ENCODE measurements at regions of chr15 and their contacts with region 1.

Region 1: DNA sequence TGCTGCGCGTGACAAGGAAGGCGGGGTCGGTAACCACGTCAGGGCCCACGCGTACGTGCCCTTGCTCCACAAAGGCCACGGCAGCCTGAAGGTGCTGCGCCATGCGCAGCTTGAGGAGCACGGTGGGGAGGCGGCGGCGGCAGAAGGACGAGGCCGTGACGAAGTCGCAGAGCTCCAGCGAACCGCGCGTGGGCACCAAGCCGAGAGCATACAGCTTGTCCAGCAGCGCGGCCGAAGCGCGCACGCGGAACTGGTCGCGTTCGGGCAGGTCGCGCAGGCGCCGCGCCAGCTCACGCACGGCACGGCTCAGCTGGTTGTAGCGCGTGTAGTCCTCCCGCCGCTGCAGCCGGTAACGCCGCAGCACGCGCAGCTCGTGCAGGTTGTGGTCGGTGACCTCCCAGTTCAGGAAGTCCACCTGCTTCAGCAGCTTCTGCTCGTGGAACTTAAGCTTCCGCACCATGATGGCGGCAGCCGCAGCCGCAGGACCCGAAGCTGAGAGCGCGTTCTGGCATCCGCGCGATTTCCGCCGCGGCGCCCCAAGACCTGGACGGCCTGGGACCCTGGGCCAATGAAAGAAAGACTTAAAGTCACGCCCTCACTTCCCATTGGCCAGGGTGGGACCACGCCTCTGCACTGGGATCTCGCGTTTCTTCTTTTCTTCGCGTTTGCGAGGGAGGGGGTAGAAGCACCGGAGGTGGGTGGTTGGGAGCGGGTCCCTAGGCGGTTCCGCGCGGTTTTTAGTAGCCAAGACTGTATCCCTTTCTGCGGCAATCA is at the start of gene IMP3:
- DNase-seq: peak; percentile 97
- H3K4me3 Mint-ChIP-seq: peak within 1 kb of the TSS; percentile 95
- H3K27ac Mint-ChIP-seq: peak within 1 kb of the TSS; percentile 91
- H3K4me1 Mint-ChIP-seq: peaks cover 30% of the 10 kb centered on the region
- H3K27me3 Mint-ChIP-seq: no peaks in the 10 kb centered on the region
- total RNA-seq, gene IMP3: 46.1 to 46.8 TPM

Region 2: GRCh38 chr15:75347222-75347878 is 292.5 kb before region 1 on chr15:
- CTCF ChIA-PET with region 1: no interaction called
- intact Hi-C with region 1: loop called (anchors 5 kb)
- DNase-seq: peak; percentile 56
- H3K4me3 Mint-ChIP-seq: peak overlapping the region; percentile 77
- H3K27ac Mint-ChIP-seq: no peak overlapping the region
- H3K4me1 Mint-ChIP-seq: peaks cover 36% of the 10 kb centered on the region
- H3K27me3 Mint-ChIP-seq: no peaks in the 10 kb centered on the region

Region 3: DNA sequence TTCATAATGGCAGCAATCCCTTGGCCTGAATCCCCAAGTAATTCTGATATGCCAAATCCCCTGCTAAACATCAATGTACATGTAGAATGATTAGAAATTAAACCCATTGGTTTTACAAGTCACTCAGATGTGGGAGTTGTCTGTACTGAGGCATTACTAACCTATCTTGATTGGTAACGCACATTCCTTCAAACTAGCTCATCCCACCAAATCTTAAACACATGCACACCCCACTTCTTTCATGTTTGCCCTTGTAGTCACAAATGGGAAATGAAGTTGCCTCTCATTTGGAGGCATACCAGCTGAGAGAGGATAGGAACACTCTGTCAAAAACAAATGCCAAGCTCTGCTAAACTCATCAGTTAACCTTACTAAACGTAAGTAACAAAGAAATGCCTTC is 242.4 kb before region 1 on chr15:
- CTCF ChIA-PET with region 1: no interaction called
- intact Hi-C with region 1: no loop called
- DNase-seq: no peak
- H3K4me3 Mint-ChIP-seq: no peak overlapping the region
- H3K27ac Mint-ChIP-seq: no peak overlapping the region
- H3K4me1 Mint-ChIP-seq: peaks cover 5% of the 10 kb centered on the region
- H3K27me3 Mint-ChIP-seq: no peaks in the 10 kb centered on the region

Region 4: GRCh38 chr15:75416584-75416983 is 223.3 kb before region 1 on chr15:
- CTCF ChIA-PET with region 1: no interaction called
- intact Hi-C with region 1: no loop called
- DNase-seq: no peak
- H3K4me3 Mint-ChIP-seq: no peak overlapping the region
- H3K27ac Mint-ChIP-seq: peak overlapping the region; percentile 61
- H3K4me1 Mint-ChIP-seq: peaks cover 22% of the 10 kb centered on the region
- H3K27me3 Mint-ChIP-seq: no peaks in the 10 kb centered on the region

Region 5: DNA sequence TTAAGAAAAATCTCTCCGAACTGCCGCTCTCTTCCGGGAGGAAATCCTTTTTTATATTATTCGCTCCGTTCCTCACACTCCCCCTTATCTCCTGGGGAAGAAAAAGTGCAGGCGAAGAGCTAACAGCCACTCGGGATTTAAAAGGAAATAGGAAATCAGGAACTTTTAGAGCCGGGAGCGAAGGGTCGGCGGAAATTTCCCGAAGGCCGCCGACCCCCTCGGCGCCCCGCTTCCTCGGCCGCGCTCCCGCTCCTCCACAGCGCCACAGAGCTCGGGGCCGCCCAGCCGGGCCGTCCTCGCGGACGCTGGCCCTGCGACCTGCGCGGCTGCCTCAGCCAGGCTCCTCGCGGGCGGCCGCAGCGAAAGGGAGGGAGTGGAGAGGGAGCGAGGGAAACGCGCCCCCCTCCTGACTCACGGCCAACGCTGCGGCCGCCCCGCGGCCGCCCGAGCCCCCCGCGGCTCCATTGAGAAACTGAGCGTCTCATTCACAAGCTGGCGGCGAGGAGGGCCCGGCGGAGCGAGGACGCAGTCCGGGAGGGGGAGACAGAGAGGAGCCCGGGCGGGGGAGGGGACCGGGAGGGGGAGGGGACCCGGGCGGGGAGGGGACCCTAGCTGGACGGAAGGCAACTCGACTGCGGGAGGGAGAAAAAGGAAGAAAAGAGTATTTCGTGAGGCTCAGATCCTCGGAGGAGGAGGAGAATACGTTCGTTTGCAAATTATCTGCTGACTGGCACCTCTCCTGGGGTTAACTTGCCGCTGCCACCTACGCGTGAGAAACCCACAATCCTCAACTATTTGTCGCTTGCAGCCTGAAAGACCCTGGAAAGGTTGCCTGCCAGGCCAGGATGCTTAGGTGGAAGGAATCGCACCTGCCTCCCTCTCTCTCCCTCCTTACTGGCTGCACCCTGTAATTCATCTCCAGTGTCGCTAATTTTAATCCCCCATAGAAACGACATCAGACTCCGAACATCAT is 60.7 kb before region 1 on chr15 and contains the start of gene PTPN9:
- CTCF ChIA-PET with region 1: interaction called, 3 read pairs
- intact Hi-C with region 1: loop called (anchors 2 kb)
- DNase-seq: peak; percentile 76
- H3K4me3 Mint-ChIP-seq: peak within 1 kb of the TSS; percentile 90
- H3K27ac Mint-ChIP-seq: peak within 1 kb of the TSS; percentile 86
- H3K4me1 Mint-ChIP-seq: peaks cover 14% of the 10 kb centered on the region
- H3K27me3 Mint-ChIP-seq: no peaks in the 10 kb centered on the region
- total RNA-seq, gene PTPN9: 9.5 to 10.1 TPM

Region 6: GRCh38 chr15:75616764-75617163 is 23.1 kb before region 1 on chr15:
- CTCF ChIA-PET with region 1: interaction called, 11 read pairs
- intact Hi-C with region 1: no loop called
- DNase-seq: no peak
- H3K4me3 Mint-ChIP-seq: no peak overlapping the region
- H3K27ac Mint-ChIP-seq: no peak overlapping the region
- H3K4me1 Mint-ChIP-seq: peaks cover 28% of the 10 kb centered on the region
- H3K27me3 Mint-ChIP-seq: no peaks in the 10 kb centered on the region

Region 7: DNA sequence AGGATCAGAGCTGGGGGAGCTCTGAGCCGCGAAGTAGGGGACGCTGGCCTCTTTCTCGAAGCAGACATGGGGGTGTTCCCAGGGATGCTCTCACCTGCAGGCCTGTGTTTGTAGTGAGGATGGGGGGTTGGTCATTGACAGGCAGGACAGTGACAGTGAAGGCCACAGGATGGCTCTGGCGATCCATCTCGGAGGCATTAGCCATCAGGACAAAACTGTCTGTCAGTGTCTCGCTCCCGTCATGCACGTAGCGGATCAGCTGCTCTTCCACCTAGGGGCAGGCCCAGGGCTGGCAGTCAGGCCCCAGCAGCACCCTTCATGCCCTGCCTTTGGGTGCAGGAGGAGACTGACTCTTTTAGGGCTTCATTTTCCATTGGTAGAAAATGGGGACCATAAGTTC is 44.7 kb after region 1 on chr15:
- CTCF ChIA-PET with region 1: interaction called, 3 read pairs
- intact Hi-C with region 1: loop called (anchors 2 kb)
- DNase-seq: no peak
- H3K4me3 Mint-ChIP-seq: no peak overlapping the region
- H3K27ac Mint-ChIP-seq: no peak overlapping the region
- H3K4me1 Mint-ChIP-seq: no peaks in the 10 kb centered on the region
- H3K27me3 Mint-ChIP-seq: no peaks in the 10 kb centered on the region

Region 8: DNA sequence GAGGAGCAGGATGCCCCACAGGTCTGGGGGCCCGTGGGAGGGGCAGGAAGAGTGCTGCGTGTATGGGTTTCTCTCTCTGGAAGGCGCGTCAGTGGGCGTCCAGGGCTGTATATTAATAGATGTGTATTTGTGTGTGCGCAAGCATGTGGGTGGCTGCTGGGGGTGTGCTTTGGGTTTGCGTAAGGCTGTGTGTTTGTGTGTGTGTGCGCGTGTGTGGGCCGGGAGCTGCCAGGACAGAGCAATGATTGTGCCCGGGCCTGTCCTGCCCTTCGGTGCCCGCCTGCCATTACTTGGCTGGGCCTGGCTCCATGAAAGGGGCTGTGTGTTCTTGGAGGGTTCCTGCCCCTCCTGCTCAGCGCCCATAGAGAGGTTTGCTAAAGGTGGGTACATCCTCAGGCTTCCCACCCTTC is 56.4 kb after region 1 on chr15:
- CTCF ChIA-PET with region 1: no interaction called
- intact Hi-C with region 1: no loop called
- DNase-seq: no peak
- H3K4me3 Mint-ChIP-seq: no peak overlapping the region
- H3K27ac Mint-ChIP-seq: no peak overlapping the region
- H3K4me1 Mint-ChIP-seq: peaks cover 6% of the 10 kb centered on the region
- H3K27me3 Mint-ChIP-seq: peaks cover 18% of the 10 kb centered on the region

Region 9: GRCh38 chr15:75928680-75929608 is 289.0 kb after region 1 on chr15:
- CTCF ChIA-PET with region 1: no interaction called
- intact Hi-C with region 1: no loop called
- DNase-seq: no peak
- H3K4me3 Mint-ChIP-seq: no peak overlapping the region
- H3K27ac Mint-ChIP-seq: no peak overlapping the region
- H3K4me1 Mint-ChIP-seq: peaks cover 18% of the 10 kb centered on the region
- H3K27me3 Mint-ChIP-seq: no peaks in the 10 kb centered on the region

Measured in activated naive CD4-positive, alpha-beta T cell treated with anti-CD3 and anti-CD28 coated beads for 36 hours (primary cell).